Cardiac septum (tissue), 1 donor: ENCODE measurements at regions of chr14 and their contacts with region 1.

Region 1: DNA sequence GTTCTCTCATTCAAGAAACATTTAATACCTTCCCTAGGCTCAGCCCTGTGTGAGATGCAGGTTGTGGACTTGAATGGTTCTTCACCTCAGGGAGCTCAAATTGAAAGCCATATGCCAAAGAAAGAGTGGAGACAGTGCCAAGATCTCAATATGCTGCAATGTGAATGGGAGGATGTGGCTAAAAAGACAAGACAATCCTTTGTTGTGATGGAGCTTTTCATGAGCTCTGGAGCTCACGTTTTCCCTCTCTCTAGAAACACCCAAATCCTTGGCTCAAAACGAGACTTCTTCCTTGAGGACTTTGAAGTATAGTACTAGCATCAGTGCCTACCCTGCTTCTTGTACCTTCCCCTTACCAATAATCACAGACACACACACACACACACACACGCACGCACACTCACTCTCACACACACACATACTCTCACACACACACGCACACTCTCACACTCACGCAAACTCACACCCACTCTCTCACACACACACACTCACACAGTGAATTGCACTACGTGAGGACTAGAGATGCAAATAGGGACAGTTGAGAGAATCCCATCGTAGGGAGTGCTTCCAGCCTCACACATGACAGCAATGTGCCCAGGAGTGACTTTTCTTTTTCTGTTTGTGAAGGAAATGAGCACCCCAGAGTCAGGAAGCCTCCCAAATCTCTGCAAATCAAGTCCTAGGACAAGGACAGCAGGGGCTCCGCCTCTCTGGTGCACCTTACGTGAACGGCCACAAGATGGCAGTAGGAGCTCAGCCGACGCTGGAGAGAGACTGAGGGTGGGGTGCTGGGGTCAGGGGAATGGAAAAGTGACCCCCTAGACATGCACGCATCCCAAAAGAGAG is 231.4 kb downstream of the PCNX1 start:
- DNase-seq: peak; percentile 86

Region 2: GRCh38 chr14:71320107-71320733 is 181.5 kb after region 1 on chr14:
- intact Hi-C with region 1: loop called (anchors 5 kb)
- DNase-seq: peak; percentile 99

Region 3: DNA sequence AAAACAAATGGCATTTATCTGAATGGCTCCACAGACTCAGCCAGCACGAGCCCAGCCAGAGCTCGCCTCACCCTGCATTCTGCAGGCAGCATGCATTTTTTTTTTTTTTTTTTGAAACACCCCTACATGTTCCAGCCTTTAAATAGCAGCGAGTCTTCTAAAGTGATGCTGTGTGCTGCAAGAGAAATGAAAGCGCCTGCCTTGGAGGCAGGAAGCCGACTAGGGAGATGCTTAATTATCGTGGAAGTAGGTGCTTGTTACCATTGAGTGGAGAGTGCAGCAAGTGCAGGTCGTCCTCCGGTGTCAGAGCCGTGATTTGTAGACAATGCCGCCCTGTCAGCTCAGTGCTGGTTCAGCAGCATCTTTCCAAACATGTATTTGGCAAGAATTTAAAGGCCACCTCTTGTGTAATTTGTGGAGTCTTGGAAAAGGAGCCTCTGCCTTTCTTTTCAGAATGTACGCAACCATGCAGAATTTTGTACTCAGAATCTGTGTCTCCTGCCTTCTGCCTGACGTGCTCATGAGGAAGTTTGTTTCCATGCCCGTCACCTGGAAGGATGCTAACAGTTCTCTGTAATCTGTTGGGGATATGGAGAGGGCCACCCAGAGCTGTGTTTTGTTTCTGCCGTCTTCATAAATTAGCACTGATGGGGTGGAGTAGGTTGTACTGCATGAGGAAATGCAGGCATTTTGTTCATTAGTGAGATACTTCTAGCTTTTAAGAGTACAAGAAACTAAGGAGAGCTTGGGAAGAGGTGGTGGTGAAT is 447.6 kb after region 1 on chr14:
- intact Hi-C with region 1: loop called (anchors 10 kb)
- DNase-seq: no peak

Region 4: GRCh38 chr14:71753126-71753830 is 614.6 kb after region 1 on chr14:
- intact Hi-C with region 1: loop called (anchors 1 kb)
- DNase-seq: peak; percentile 92

Region 5: DNA sequence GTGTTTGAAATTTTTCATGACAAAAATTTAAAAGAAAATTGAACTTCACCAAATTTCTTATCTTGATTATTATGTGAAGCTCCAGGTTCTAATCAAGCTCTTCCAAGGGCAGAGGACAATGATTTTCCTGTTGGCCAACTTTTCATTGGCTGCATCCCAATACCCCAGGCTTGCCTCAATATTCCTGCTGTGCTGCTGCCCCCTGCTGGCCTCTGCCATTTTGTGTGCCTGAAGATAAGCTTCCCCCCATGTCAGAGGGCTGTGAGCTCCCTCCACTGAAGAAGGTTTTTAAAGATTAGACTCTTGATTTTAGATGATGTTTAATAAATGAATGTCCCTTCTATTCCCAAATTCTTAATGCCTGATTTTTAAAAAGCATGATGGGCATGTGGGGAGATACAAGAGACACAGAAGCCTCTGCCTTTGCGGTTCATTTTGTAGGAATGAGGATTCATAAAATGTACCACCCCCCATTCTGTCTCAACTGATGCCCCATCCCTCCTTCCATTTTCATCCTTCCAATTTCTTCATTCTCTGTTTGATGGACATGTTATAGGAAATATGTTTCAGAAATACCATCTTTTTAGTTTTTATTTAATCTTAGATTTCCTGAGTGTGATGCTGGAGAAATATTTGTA is 716.8 kb after region 1 on chr14:
- intact Hi-C with region 1: loop called (anchors 10 kb)
- DNase-seq: peak; percentile 78